Calu3 (cell line): ENCODE measurements at regions of chr11 and their contacts with region 1.

Region 1: DNA sequence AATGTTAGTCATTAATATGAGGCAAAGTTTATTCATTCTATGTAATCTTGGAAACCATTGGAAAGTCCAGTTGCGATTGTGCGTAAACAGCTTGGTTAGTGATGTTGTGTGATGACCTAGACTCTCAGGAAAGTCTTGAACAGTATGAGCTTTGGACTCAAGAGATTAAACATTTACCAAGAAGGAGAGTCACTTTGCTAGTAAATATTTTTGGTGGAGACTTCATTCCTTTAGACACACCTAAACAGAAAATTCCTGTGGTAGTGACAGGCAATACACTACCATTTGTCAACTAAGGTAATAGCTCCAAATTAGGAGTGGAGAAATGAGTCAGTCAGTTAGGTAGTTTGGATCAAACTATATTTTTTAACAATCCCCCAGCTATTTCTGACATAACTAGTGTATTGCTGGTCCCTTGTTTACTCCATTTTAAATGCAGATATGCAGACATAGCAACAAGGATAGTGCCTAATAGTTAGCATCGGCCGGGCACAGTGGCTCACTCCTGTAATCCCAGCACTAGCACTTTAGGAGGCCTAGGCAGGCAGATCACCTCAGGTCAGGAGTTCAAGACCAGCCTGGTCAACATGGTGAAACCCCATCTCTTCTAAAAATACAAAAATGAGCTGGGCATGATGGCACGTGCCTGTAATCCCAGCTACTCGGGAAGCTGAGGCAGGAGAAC is 89.3 kb downstream of the ARHGAP42 start:
- DNase-seq: peak; percentile 44
- H3K4me3 Mint-ChIP-seq: peak overlapping the region; percentile 55
- H3K27ac Mint-ChIP-seq: peak overlapping the region; percentile 98
- H3K4me1 Mint-ChIP-seq: peaks cover 26% of the 10 kb centered on the region
- H3K27me3 Mint-ChIP-seq: no peaks in the 10 kb centered on the region
- CTCF ChIP-seq: no peak

Region 2: DNA sequence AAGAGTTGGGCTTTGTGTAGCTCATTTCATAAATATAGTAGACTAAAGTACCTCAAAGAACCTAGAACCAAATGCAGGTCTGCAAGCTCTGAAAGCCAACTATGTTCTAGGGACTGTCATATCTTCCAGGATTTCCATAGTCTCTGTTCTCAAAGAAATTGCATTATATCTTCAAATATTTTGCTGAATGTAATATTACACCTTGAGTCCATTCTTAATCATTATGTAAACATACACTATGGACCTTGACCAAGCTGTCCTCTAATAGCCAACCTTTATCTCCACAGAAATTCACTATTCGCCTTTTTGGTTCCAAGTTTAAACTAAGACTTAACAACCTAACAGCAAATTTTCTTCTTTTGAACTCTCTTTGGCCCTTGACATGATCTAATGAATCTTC is 767.9 kb before region 1 on chr11:
- CTCF ChIA-PET with region 1: no interaction called
- intact Hi-C with region 1: loop called (anchors 5 kb)
- DNase-seq: no peak
- H3K4me3 Mint-ChIP-seq: no peak overlapping the region
- H3K27ac Mint-ChIP-seq: no peak overlapping the region
- H3K4me1 Mint-ChIP-seq: peaks cover 32% of the 10 kb centered on the region
- H3K27me3 Mint-ChIP-seq: no peaks in the 10 kb centered on the region
- CTCF ChIP-seq: no peak

Region 3: DNA sequence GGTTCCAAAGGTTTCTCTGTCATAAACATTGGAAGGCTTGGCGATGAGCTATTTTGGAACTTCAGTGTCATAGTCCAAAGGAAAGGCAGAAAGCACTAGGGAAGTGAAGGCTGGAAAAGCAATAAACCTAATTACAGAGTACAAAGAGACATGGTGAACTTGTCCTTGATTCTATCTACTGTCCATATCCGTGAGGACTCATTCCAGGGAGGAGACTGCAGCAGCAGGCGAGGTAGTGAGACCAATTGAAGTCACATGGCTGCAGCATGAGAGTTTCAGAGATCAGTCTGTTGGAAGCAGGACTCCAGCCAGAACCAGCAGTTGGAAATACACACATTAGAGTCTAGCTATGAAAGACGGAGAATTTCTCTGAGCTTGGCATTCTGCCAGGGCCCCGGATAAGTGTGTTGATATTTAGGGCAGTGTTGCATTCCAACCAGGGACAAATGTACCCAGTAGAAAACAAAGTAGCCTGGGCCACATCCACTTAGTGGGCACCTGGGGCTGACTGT is 143.4 kb before region 1 on chr11:
- CTCF ChIA-PET with region 1: no interaction called
- intact Hi-C with region 1: no loop called
- DNase-seq: peak; percentile 38
- H3K4me3 Mint-ChIP-seq: no peak overlapping the region
- H3K27ac Mint-ChIP-seq: peak overlapping the region; percentile 0
- H3K4me1 Mint-ChIP-seq: peaks cover 31% of the 10 kb centered on the region
- H3K27me3 Mint-ChIP-seq: no peaks in the 10 kb centered on the region
- CTCF ChIP-seq: no peak

Region 4: DNA sequence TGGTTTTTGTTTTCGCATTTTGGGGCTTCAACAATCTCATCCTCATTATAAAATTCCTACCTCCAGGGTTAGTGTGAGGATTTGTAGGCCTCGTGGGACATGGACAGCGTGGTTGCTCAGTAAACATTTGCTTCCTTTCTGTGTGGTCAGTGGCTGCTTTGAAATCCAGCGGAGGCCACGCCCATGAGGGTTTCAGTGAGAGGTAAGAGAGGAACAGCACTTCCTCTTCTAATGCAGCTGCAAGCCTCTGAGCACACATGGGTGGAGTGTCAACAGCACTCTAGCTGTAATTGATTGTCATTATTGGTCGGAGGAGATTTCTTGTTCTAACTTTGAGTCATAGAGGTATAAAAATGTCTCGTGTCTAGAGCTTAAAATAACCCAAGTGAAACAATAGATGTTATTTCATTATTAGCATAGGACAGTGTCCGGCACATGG is 95.3 kb before region 1 on chr11:
- CTCF ChIA-PET with region 1: interaction called, 3 read pairs
- intact Hi-C with region 1: loop called (anchors 2 kb)
- DNase-seq: peak; percentile 74
- H3K4me3 Mint-ChIP-seq: no peak overlapping the region
- H3K27ac Mint-ChIP-seq: peak overlapping the region; percentile 60
- H3K4me1 Mint-ChIP-seq: peaks cover 31% of the 10 kb centered on the region
- H3K27me3 Mint-ChIP-seq: no peaks in the 10 kb centered on the region
- CTCF ChIP-seq: no peak

Region 5: GRCh38 chr11:100687630-100688395 is 88.5 kb before region 1 on chr11:
- CTCF ChIA-PET with region 1: interaction called, 20 read pairs
- intact Hi-C with region 1: loop called (anchors 2 kb)
- DNase-seq: peak; percentile 51
- H3K4me3 Mint-ChIP-seq: peak overlapping the region; percentile 90
- H3K27ac Mint-ChIP-seq: peak overlapping the region; percentile 85
- H3K4me1 Mint-ChIP-seq: peaks cover 29% of the 10 kb centered on the region
- H3K27me3 Mint-ChIP-seq: no peaks in the 10 kb centered on the region
- CTCF ChIP-seq: no peak

Region 6: GRCh38 chr11:100739666-100740065 is 36.7 kb before region 1 on chr11:
- CTCF ChIA-PET with region 1: no interaction called
- intact Hi-C with region 1: loop called (anchors 5 kb)
- DNase-seq: peak; percentile 55
- H3K4me3 Mint-ChIP-seq: no peak overlapping the region
- H3K27ac Mint-ChIP-seq: no peak overlapping the region
- H3K4me1 Mint-ChIP-seq: peaks cover 22% of the 10 kb centered on the region
- H3K27me3 Mint-ChIP-seq: no peaks in the 10 kb centered on the region
- CTCF ChIP-seq: no peak

Region 7: DNA sequence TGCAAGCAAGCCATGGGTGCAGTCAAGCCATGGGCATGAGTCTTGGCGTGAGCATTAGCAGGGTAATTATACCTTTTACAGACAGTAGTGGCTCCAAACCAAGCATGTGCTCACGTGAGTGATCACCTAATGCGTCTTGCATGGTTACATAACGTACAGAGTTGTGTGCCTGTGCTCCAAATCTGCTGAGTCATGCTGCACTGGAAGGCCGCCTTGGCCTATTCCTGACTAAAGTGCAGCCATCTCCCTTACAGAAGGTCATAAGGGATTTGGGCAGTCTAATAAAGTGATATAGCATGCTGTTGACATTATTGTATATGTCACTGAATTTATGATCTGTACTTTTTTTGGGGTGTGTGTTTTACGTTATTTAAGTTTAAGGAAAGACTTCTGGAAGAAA is 13.1 kb after region 1 on chr11:
- CTCF ChIA-PET with region 1: no interaction called
- intact Hi-C with region 1: no loop called
- DNase-seq: no peak
- H3K4me3 Mint-ChIP-seq: no peak overlapping the region
- H3K27ac Mint-ChIP-seq: peak overlapping the region; percentile 36
- H3K4me1 Mint-ChIP-seq: peaks cover 14% of the 10 kb centered on the region
- H3K27me3 Mint-ChIP-seq: no peaks in the 10 kb centered on the region
- CTCF ChIP-seq: no peak

Region 8: DNA sequence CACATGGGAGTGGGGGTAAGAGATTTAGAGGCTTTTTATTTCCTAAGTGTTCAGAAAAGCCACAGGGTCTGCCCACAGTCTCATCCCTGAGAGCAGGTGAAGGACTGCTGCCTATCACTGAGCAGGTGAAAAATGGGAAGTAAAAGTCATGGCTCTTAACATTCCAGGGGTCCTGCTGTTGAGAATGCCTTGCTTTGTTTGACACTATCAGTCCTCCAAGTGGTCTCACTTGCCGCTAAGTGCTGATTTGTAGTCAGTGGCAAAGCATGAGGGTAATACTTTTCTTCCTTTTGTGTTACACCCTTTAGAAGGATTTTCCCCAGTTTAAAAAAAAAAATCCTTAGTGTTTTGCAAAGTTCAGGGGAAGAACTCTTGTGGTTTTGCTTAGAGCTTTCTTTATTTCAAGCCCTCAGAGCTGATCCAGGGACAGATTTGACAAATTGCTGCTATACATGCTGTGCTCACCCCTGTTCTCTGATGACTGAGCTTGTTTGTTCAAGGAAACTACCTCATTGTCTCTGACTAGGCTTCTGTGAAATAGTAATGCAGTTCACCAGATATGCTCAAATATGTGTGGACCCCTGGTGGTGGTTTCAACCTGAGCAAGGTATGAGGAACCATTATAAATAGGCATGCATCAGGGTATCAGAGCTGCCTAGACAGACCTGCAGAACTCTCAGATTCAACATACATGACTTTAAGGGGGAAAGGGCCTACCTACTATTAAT is 51.7 kb after region 1 on chr11:
- CTCF ChIA-PET with region 1: interaction called, 18 read pairs
- intact Hi-C with region 1: loop called (anchors 1 kb)
- DNase-seq: peak; percentile 68
- H3K4me3 Mint-ChIP-seq: no peak overlapping the region
- H3K27ac Mint-ChIP-seq: peak overlapping the region; percentile 83
- H3K4me1 Mint-ChIP-seq: peaks cover 26% of the 10 kb centered on the region
- H3K27me3 Mint-ChIP-seq: no peaks in the 10 kb centered on the region
- CTCF ChIP-seq: no peak

Region 9: DNA sequence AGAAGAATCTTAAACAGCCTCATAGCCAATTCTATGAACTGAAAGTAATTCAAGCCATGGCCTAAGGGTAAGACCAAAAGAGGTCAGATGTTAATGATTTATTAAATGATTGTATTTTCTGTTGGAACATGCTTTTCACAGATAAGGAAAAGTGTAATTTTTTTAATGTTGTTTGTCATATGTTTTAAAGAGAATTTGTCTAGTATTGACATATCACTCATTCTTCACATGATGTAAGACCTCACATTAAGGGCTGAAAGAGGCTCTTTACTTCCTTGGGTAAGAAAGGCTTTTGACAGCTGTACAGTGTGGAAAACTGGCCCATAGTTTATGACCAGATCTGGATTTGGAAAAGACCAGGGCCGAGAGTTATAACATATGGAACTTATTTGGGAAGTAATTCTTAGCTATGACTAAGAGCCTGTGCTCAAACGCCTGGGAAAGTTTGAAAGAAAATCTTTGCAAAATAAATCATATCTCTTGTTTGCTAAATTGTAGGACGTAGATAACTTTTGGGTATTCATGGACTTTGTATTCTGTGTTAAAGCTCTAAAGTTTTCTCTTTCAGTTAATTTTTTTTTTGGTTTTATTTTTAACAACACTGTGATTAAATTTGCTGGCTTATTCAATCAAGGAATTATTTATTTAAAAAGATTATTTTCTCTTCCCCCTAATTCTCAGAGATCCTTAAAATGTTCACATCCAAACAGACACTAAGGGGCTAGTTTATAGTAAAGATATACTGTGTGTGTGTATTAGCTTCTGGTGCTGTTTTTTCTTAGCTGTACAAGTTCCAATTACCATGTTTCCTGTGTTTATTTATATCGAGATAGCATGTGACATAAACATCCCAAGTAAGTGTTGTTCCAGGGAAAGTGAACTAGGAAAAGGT is 72.9 kb after region 1 on chr11:
- CTCF ChIA-PET with region 1: interaction called, 8 read pairs
- intact Hi-C with region 1: loop called (anchors 1 kb)
- DNase-seq: no peak
- H3K4me3 Mint-ChIP-seq: peak overlapping the region; percentile 7
- H3K27ac Mint-ChIP-seq: peak overlapping the region; percentile 60
- H3K4me1 Mint-ChIP-seq: peaks cover 26% of the 10 kb centered on the region
- H3K27me3 Mint-ChIP-seq: no peaks in the 10 kb centered on the region
- CTCF ChIP-seq: no peak